PC-3 (cell line): ENCODE measurements at regions of chr12 and their contacts with region 1.

Region 1: GRCh38 chr12:89345830-89346740 is 6.2 kb downstream of the DUSP6 start:
- DNase-seq: peak; percentile 77
- ATAC-seq: peak; percentile 44
- H3K4me3 ChIP-seq: peak overlapping the region; percentile 39
- H3K27ac ChIP-seq: peak overlapping the region; percentile 37
- H3K4me1 ChIP-seq: peaks cover 37% of the 10 kb centered on the region
- H3K27me3 ChIP-seq: no peaks in the 10 kb centered on the region
- CTCF ChIP-seq: no peak

Region 2: GRCh38 chr12:89019408-89020120 is 326.5 kb before region 1 on chr12:
- CTCF ChIA-PET with region 1: interaction called, 4 read pairs
- POLR2A ChIA-PET with region 1: no interaction called
- intact Hi-C with region 1: loop called (anchors 1 kb)
- DNase-seq: peak; percentile 89
- ATAC-seq: peak; percentile 89
- H3K4me3 ChIP-seq: peak overlapping the region; percentile 64
- H3K27ac ChIP-seq: peak overlapping the region; percentile 12; the same call in 1 of the 2 replicates
- H3K4me1 ChIP-seq: peaks cover 17% of the 10 kb centered on the region
- H3K27me3 ChIP-seq: no peaks in the 10 kb centered on the region
- CTCF ChIP-seq: peak; percentile 99

Region 3: DNA sequence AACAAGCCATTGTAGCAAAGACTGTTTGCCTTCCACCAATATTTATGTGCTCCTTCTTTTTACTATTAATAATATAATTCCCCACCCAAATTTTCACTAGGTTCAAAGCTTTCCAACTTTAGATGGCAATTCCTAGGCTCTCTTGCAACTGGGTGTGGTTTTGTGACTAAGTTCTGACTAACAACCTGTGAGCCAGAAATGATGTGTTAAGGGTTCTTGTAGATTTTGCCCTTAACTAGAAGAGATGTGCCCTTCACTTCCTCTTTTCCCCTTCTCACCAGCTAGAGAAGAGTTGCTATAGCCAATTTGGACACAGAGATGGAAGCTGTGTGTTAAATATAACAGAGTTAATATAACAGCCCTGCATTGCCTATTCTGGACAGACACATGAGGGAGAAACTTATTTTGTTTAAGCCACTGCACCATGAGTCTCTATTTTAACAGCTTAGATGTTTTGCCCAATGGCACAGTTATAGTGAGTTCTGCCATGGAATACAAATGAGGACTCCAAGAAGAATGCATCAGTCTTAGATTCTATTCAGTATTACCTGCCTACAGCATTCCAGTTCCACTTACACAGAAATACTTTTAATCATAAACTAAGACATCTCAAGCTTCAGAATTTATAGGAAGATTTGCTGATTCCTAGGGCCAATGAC is 210.0 kb before region 1 on chr12:
- CTCF ChIA-PET with region 1: no interaction called
- POLR2A ChIA-PET with region 1: no interaction called
- intact Hi-C with region 1: loop called (anchors 1 kb)
- DNase-seq: peak; percentile 91
- ATAC-seq: peak; percentile 82
- H3K4me3 ChIP-seq: no peak overlapping the region
- H3K27ac ChIP-seq: peak overlapping the region; percentile 78
- H3K4me1 ChIP-seq: peaks cover 46% of the 10 kb centered on the region
- H3K27me3 ChIP-seq: no peaks in the 10 kb centered on the region
- CTCF ChIP-seq: no peak

Region 4: GRCh38 chr12:89179983-89180382 is 166.1 kb before region 1 on chr12:
- CTCF ChIA-PET with region 1: no interaction called
- POLR2A ChIA-PET with region 1: interaction called, 3 read pairs
- intact Hi-C with region 1: loop called (anchors 1 kb)
- DNase-seq: peak; percentile 87
- ATAC-seq: peak; percentile 20; the same call in 1 of the 2 replicates
- H3K4me3 ChIP-seq: no peak overlapping the region
- H3K27ac ChIP-seq: no peak overlapping the region
- H3K4me1 ChIP-seq: peaks cover 37% of the 10 kb centered on the region
- H3K27me3 ChIP-seq: no peaks in the 10 kb centered on the region
- CTCF ChIP-seq: no peak

Region 5: DNA sequence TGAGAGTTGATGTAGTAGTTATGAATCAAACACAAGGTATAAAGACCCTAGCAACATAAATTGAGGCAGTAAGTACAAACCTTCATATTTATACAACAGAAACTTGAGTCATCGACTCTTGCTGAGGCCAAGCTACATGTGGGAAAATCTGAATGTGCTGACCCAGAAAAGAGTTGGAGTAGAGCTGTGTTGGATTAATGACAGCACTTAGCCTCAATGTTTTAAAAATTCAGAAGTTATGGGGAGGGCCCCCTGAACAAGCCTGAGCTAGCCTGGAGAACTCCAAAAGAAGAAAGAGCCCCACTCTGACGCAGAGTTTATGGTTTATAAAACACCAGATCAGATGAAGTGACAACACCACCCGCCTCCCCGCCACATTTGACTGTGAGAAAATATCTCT is 93.8 kb before region 1 on chr12:
- CTCF ChIA-PET with region 1: no interaction called
- POLR2A ChIA-PET with region 1: no interaction called
- intact Hi-C with region 1: loop called (anchors 5 kb)
- DNase-seq: no peak
- ATAC-seq: no peak
- H3K4me3 ChIP-seq: no peak overlapping the region
- H3K27ac ChIP-seq: no peak overlapping the region
- H3K4me1 ChIP-seq: peaks cover 36% of the 10 kb centered on the region
- H3K27me3 ChIP-seq: no peaks in the 10 kb centered on the region
- CTCF ChIP-seq: no peak